WTC11 (cell line): ENCODE measurements at regions of chr3 and their contacts with region 1.

Region 1: GRCh38 chr3:88149509-88150362 is at the start of gene C3orf38:
- DNase-seq: peak; percentile 81
- ATAC-seq: peak; percentile 92
- H3K4me3 Mint-ChIP-seq: peak within 1 kb of the TSS; percentile 95
- H3K27ac Mint-ChIP-seq: peak within 1 kb of the TSS; percentile 98
- H3K4me1 Mint-ChIP-seq: peaks cover 20% of the 10 kb centered on the region
- H3K27me3 Mint-ChIP-seq: no peaks in the 10 kb centered on the region
- CTCF ChIP-seq: no peak
- total RNA-seq, gene C3orf38: 22.5 to 24.1 TPM (median 23.9 TPM) in 3 replicates

Region 2: DNA sequence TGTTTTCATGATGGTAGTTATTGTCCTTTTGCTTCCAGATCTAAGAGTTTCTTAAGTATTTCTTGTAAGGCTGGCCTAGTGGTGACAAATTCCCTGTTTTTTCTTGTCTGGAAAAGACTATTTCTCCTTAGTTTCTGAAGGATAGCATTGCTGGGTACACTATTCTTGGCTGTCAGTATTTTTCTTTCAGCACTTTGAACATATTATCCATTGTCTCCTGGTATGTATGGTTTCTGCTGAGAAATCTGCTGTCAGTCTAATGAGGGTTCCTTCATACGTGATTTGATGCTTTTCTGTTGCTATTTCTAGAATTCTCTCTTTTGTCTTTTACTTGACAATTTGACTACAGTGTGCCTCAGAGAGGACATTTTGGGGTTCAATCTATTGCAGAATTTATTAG is 225.3 kb before region 1 on chr3:
- CTCF ChIA-PET with region 1: no interaction called
- POLR2A ChIA-PET with region 1: no interaction called
- DNase-seq: no peak
- ATAC-seq: no peak
- H3K4me3 Mint-ChIP-seq: no peak overlapping the region
- H3K27ac Mint-ChIP-seq: no peak overlapping the region
- H3K4me1 Mint-ChIP-seq: no peaks in the 10 kb centered on the region
- H3K27me3 Mint-ChIP-seq: peaks cover 2% of the 10 kb centered on the region; the same call in 1 of the 2 replicates
- CTCF ChIP-seq: no peak

Region 3: DNA sequence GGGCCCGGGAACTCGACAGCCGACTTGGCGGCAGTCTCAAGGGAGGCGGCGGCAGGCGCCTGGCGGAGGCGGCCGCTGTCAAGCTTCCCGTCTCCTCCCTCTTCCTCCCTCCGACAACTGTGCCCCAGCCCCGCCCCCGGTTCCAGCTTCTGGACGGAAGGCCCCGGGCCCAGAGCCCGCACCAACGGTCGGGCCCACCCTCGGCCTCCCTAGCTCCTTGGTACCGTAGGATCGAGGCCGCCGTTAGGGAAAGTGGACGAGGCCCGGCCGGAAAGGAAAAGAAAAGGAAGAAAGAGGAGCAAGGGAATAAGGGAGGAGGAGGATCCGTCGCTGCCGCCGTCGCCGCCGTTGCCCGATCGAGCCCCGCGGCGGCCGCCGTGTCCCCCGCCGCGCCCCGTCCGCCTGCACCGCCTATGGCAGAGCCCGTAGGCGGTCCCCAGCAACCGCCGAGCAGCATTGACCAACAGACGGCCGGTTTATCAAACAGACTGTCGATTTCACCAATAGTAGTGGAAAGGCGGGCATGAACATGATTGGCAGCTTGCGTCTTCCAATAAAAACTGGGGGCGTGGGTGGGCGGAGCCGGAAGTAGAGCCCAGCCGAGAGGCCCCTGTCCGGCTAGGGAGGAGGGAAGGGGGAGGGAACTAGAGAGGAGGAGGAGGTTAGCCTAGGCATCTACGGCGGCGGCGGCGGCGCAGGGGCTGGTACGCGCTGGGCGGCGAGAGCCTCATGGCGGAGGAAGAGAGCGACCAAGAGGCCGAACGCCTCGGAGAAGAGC is 91.0 kb before region 1 on chr3 and contains the starts of genes CGGBP1 and ZNF654:
- CTCF ChIA-PET with region 1: no interaction called
- POLR2A ChIA-PET with region 1: interaction called, 10 read pairs
- DNase-seq: peak; percentile 98
- ATAC-seq: peak; percentile 95
- H3K4me3 Mint-ChIP-seq: peak within 1 kb of the TSS; percentile 96
- H3K27ac Mint-ChIP-seq: peak within 1 kb of the TSS; percentile 89
- H3K4me1 Mint-ChIP-seq: peaks cover 19% of the 10 kb centered on the region
- H3K27me3 Mint-ChIP-seq: no peaks in the 10 kb centered on the region
- CTCF ChIP-seq: no peak
- total RNA-seq, gene CGGBP1: 57.6 to 61.3 TPM (median 60.7 TPM) in 3 replicates
- total RNA-seq, gene ZNF654: 7.0 to 10.0 TPM (median 8.3 TPM) in 3 replicates